Activated naive CD4-positive, alpha-beta T cell treated with anti-CD3 and anti-CD28 coated beads for 36 hours (primary cell): ENCODE measurements at regions of chr15 and their contacts with region 1.

Region 1: GRCh38 chr15:89206908-89207331 is 14.5 kb downstream of the RLBP1 start:
- DNase-seq: peak; percentile 82
- H3K4me3 Mint-ChIP-seq: no peak overlapping the region
- H3K27ac Mint-ChIP-seq: no peak overlapping the region
- H3K4me1 Mint-ChIP-seq: peaks cover 29% of the 10 kb centered on the region
- H3K27me3 Mint-ChIP-seq: no peaks in the 10 kb centered on the region

Region 2: DNA sequence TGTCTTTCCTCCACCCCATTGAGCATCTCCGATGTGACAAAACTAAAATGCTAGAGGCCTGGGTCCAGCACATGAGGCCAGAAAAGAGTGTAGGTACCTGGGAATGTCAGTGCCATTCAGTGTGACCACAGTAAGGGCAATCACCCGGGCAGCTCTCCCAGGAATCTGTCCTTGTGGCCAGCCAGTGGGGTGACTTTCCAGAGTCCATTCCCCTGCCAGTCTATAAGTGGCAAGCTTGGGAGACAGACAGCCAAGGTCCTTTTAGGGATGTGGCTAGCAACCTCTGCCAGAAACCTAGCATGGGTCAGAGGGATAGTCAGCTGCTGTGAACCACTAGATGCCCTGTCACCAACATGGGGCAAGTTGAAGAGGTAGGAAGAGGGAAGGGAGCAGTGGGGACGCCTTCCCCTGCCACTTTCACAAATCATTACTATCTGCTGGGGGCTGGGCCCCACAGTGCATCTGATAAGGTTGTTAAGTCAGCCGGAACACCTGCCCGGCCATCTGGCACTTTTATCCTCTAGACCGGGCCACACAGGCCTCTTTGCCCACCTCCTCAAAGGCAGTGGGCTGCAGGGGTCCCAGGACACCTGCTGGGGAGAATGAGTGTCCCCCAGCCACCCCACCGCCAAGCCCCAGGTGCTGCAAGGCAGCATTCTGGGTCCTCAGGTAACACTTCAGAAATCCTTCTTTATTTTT is 635.6 kb before region 1 on chr15:
- CTCF ChIA-PET with region 1: no interaction called
- intact Hi-C with region 1: no loop called
- DNase-seq: no peak
- H3K4me3 Mint-ChIP-seq: no peak overlapping the region
- H3K27ac Mint-ChIP-seq: no peak overlapping the region
- H3K4me1 Mint-ChIP-seq: no peaks in the 10 kb centered on the region
- H3K27me3 Mint-ChIP-seq: peaks cover 5% of the 10 kb centered on the region

Region 3: DNA sequence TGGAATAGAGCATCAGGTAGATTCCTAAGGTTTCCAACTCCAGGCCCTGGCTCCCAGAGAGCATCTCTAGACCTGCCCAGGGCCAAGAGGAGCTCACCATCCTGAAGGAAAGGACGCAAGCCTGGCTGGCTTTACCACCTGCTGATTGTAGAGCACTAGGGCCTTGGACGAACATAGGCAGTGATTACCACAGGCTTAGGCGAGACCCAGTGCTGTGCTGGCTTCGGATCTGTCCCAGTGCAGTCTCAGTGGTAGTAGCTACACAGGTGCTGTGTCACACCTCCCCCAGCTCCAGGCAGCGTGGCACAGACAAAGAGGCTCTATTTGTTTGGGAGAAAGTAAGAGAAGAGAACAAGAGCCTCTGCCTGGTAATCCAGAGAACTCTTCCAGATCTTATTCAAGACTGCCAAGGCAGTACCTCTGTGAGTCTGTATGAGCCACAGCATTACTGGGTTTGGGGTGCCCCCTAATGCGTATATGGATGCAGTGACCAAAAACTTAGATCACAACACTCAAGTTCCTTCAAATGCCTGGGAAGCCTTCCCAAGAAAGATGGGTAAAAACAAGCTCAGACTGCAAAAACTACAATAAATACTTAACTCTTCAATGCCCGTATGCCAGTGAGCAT is 542.7 kb before region 1 on chr15:
- CTCF ChIA-PET with region 1: no interaction called
- intact Hi-C with region 1: no loop called
- DNase-seq: peak; percentile 78
- H3K4me3 Mint-ChIP-seq: no peak overlapping the region
- H3K27ac Mint-ChIP-seq: no peak overlapping the region
- H3K4me1 Mint-ChIP-seq: peaks cover 31% of the 10 kb centered on the region
- H3K27me3 Mint-ChIP-seq: peaks cover 2% of the 10 kb centered on the region

Region 4: GRCh38 chr15:89177633-89178306 is 29.1 kb before region 1 on chr15:
- CTCF ChIA-PET with region 1: interaction called, 13 read pairs
- intact Hi-C with region 1: loop called (anchors 1 kb)
- DNase-seq: peak; percentile 86
- H3K4me3 Mint-ChIP-seq: no peak overlapping the region
- H3K27ac Mint-ChIP-seq: peak overlapping the region; percentile 94
- H3K4me1 Mint-ChIP-seq: peaks cover 46% of the 10 kb centered on the region
- H3K27me3 Mint-ChIP-seq: no peaks in the 10 kb centered on the region

Region 5: DNA sequence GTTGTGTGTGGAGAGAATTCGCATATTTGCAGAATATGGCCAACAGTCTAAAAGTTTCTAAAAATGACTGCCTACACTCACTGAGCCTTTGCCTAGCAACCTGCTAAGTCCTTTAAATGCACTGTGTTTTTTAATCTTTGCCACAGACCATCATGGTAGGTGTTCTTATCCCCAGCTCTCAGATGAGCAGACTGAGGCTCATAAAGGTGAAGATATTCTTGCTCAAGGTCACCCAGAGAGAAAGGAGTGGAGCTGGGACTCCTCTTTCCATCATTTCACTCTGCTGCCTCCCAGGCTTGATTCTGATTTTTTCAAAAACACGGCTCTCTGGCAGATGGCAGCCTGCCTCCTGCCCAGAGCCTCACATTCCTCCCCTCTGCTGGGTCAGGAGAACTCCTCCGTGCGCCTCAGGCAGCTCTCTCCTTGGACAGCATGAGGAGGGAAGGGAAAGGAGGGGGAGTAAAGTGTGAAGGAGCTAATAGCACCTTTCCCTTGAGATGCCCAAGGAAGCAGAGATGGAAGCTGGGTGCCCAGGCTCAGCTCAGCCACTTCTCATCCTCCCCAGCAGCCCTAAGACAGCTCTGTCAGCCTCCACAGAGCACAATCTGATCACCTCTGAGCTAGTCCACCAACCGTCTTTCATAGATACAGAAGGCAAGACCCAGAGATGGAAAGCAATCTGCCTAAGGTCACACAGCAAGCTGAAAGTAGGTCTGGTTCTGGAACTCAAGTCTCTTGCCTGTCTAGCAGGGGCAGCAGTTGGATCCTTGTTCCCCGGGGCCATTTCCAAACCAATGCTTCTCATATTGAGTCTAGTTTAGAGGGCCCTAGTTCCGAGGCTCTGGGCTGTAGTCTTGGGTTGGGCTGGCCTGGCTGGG is 10.8 kb after region 1 on chr15:
- CTCF ChIA-PET with region 1: interaction called, 25 read pairs
- intact Hi-C with region 1: no loop called
- DNase-seq: no peak
- H3K4me3 Mint-ChIP-seq: no peak overlapping the region
- H3K27ac Mint-ChIP-seq: no peak overlapping the region
- H3K4me1 Mint-ChIP-seq: peaks cover 4% of the 10 kb centered on the region
- H3K27me3 Mint-ChIP-seq: no peaks in the 10 kb centered on the region

Region 6: DNA sequence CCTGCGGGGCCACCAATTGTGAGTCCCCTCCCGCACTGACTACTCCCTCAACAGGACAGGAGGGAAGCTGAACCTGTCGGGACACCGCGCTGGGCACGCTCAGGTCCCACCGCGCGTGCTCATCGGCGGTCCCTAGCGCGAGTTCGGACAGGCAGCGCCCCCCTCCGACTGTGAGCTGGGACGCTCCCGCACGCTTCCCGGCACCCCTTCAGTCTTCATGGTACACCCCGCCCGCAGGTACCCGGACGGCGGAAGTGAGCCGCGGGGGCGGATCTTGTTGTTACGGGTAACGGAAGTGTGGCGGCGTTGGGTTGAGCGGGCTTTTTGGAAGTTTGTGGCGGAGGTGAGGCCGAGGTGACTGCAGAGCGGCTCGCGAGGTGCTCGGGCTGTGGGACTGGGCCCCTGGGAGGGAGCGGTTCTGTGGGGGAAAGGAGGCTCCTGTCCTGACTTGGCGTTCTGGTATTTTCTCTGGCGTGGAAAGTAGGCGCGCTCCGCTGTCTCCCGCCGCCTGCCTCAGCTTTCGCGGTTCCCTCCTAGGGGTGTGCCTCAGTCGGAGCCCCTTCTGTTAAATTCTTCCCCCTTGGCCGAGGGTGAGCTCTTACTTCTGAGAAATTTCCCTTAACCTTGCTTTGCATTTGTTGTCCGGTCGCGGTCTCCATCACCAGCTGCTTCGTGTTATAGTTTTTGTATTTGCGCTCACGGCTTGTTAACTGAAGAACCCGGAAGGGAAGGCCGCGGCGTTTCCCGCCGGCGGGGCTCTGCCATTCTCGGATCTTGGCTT is 37.0 kb after region 1 on chr15 and contains the start of gene FANCI:
- CTCF ChIA-PET with region 1: interaction called, 38 read pairs
- intact Hi-C with region 1: loop called (anchors 1 kb)
- DNase-seq: peak; percentile 99
- H3K4me3 Mint-ChIP-seq: peak within 1 kb of the TSS; percentile 98
- H3K27ac Mint-ChIP-seq: peak within 1 kb of the TSS; percentile 93
- H3K4me1 Mint-ChIP-seq: peaks cover 31% of the 10 kb centered on the region
- H3K27me3 Mint-ChIP-seq: no peaks in the 10 kb centered on the region
- total RNA-seq, gene FANCI: 268 to 283 TPM

Region 7: DNA sequence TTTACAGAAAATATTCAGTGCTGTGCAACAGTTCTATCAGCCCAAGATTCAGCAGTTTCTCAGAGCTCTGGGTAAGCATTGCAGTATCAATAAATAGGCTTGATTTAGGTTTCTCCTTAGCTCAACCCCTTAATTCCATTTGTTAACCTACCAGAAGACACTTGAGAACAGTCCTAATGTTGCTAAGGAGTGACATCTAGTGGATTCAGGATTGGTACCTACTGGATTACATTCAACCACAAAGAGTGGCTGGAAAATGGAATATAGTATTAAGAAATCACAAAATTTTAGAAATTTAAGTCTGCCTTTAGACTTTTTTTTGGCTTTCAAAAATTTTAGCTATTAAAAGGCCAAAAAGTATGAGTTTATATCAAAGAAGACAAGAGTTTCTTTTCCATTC is 93.0 kb after region 1 on chr15:
- CTCF ChIA-PET with region 1: interaction called, 20 read pairs
- intact Hi-C with region 1: loop called (anchors 5 kb)
- DNase-seq: no peak
- H3K4me3 Mint-ChIP-seq: no peak overlapping the region
- H3K27ac Mint-ChIP-seq: no peak overlapping the region
- H3K4me1 Mint-ChIP-seq: no peaks in the 10 kb centered on the region
- H3K27me3 Mint-ChIP-seq: no peaks in the 10 kb centered on the region

Region 8: DNA sequence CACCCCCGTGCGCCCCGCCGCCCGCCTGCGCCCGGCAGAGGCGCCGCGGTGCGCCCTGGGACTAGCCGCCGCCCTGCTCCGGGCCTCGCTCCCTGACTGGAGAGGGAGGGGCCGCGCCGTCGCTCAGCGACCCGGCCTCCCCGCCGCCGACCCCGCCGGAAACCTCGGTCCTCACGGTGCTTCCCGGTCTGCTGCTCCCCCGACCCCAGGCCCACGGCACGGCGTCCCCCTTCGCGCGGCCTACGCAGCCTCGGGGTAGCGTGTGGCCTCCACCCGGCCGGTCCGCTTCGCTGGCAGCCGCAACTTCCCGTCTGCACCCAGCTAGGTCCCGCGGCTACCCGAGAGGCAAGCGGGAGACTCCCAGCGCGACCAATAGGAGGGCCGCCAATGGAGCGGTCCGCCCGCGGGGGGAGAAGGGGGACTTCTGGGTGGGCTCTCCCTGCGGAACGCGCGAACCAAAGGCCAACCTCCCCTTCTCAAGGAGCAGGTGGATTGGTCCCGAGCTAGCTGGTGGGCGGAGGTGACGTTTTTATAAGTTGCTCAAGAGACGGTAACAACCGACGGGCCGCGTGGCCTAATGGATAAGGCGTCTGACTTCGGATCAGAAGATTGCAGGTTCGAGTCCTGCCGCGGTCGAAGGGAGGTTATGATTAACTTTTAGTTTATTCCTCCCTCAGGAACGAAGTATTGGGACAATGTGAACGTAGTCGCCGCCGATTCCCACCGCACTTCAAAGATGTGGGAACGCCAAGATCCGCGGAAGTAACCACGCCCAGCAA is 127.8 kb after region 1 on chr15 and contains the start of gene POLG:
- CTCF ChIA-PET with region 1: interaction called, 4 read pairs
- intact Hi-C with region 1: loop called (anchors 1 kb)
- DNase-seq: peak; percentile 99
- H3K4me3 Mint-ChIP-seq: peak within 1 kb of the TSS; percentile 90
- H3K27ac Mint-ChIP-seq: peak within 1 kb of the TSS; percentile 94
- H3K4me1 Mint-ChIP-seq: peaks cover 52% of the 10 kb centered on the region
- H3K27me3 Mint-ChIP-seq: peaks cover 3% of the 10 kb centered on the region
- total RNA-seq, gene POLG: 93.0 to 96.5 TPM

Region 9: DNA sequence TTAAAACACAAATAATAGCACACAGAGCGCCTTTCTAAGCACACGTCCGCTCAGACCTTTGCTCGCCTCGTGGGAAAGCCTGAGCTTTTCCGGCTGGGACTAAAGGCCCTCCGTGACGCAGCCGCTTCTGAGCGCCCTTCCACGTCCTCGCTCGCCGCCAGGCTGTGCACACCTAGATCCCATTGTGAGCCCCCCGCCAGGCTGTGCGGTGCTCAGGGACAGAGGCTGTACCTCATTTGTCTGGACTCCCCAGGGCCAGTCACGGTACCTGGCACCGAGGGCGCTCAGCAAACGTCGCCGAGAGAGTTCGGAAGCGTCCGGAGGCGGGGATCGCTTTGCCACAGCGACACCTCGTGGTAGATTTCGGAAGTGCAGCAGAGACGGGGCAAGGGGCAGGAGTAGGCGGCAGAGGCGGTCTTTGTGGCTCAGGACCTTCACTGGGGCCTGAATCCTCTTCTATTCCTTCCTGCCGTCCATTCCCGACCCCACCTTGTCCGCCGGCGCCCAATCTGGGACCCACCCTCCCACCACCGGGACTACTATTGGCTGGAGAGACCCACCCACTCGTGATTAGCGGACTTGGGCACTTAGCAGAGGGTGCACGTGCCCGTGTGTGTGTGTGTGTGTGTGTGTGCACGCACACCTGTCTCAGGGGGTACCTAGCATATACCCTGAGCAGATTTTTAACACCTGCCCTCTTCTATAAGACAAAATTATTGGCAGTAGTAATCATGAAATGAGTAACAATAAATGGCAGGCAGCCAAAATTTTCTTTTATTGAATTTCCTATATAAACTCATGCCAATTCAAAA is 223.8 kb after region 1 on chr15:
- CTCF ChIA-PET with region 1: no interaction called
- intact Hi-C with region 1: loop called (anchors 1 kb)
- DNase-seq: peak; percentile 92
- H3K4me3 Mint-ChIP-seq: peak overlapping the region; percentile 70
- H3K27ac Mint-ChIP-seq: no peak overlapping the region
- H3K4me1 Mint-ChIP-seq: peaks cover 4% of the 10 kb centered on the region
- H3K27me3 Mint-ChIP-seq: peaks cover 12% of the 10 kb centered on the region